Activated naive CD4-positive, alpha-beta T cell treated with anti-CD3 and anti-CD28 coated beads for 36 hours (primary cell): ENCODE measurements at regions of chr1 and their contacts with region 1.

Region 1: GRCh38 chr1:184075055-184076029 is 23.8 kb downstream of the TSEN15 start:
- DNase-seq: peak; percentile 27
- H3K4me3 Mint-ChIP-seq: no peak overlapping the region
- H3K27ac Mint-ChIP-seq: no peak overlapping the region
- H3K4me1 Mint-ChIP-seq: peaks cover 15% of the 10 kb centered on the region
- H3K27me3 Mint-ChIP-seq: no peaks in the 10 kb centered on the region

Region 2: DNA sequence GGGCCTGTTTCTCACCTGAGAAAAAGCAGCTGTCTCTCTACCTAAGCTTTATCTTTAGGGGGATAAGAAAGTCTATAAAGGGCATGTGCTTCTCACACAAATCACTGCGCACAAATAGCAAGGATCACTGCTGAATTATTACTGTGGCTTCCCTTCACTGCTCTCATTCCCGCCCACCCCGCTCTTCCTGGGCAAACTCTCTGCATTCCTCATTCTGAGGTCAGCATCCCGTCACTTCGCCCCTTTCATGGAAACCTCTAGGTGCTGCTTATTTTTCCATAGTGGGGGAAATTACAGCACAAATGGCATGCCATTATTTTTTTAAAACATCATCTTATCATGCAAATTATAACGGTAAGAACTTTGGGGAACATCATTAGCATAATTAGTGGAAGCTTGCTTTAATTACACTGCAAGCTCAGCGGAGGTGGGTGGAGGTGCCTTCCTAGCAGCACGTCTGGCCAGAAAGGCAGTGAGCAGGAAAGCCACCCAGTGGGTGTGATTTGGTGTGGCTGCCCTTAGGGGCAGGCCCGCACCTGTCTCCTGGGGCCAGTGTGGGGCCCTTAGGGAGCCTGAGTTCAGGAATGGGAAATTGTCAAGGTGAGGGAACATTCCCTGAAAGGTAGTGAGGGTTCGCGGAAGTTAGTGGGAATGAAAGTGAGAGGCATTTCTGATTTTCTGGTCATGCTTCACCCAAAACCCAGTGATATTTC is 783.4 kb before region 1 on chr1:
- CTCF ChIA-PET with region 1: no interaction called
- intact Hi-C with region 1: no loop called
- DNase-seq: no peak
- H3K4me3 Mint-ChIP-seq: no peak overlapping the region
- H3K27ac Mint-ChIP-seq: no peak overlapping the region
- H3K4me1 Mint-ChIP-seq: no peaks in the 10 kb centered on the region
- H3K27me3 Mint-ChIP-seq: peaks cover 5% of the 10 kb centered on the region

Region 3: GRCh38 chr1:184222652-184223052 is 147.3 kb after region 1 on chr1:
- CTCF ChIA-PET with region 1: interaction called, 4 read pairs
- intact Hi-C with region 1: loop called (anchors 1 kb)
- DNase-seq: peak; percentile 59
- H3K4me3 Mint-ChIP-seq: no peak overlapping the region
- H3K27ac Mint-ChIP-seq: no peak overlapping the region
- H3K4me1 Mint-ChIP-seq: no peaks in the 10 kb centered on the region
- H3K27me3 Mint-ChIP-seq: peaks cover 2% of the 10 kb centered on the region

Region 4: DNA sequence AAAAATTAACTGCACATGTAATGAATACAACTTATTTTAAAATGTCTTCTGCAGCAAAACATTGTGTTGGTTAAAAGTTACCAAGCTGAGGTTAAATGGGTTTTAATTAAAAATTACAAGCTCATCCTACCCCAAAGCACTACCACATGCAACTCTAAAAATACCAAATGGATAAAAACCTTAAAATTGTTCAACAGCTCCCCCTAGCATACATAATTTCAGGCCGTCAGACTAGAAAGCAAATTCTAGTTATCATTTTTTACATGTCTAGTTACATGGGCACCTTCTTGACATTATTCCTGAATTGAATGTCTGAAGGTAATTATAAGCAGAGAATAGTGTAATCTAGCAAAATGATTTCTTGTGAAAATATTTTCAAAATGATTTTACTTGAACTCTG is 488.0 kb after region 1 on chr1:
- CTCF ChIA-PET with region 1: no interaction called
- intact Hi-C with region 1: loop called (anchors 5 kb)
- DNase-seq: no peak
- H3K4me3 Mint-ChIP-seq: no peak overlapping the region
- H3K27ac Mint-ChIP-seq: no peak overlapping the region
- H3K4me1 Mint-ChIP-seq: no peaks in the 10 kb centered on the region
- H3K27me3 Mint-ChIP-seq: peaks cover 6% of the 10 kb centered on the region

Region 5: DNA sequence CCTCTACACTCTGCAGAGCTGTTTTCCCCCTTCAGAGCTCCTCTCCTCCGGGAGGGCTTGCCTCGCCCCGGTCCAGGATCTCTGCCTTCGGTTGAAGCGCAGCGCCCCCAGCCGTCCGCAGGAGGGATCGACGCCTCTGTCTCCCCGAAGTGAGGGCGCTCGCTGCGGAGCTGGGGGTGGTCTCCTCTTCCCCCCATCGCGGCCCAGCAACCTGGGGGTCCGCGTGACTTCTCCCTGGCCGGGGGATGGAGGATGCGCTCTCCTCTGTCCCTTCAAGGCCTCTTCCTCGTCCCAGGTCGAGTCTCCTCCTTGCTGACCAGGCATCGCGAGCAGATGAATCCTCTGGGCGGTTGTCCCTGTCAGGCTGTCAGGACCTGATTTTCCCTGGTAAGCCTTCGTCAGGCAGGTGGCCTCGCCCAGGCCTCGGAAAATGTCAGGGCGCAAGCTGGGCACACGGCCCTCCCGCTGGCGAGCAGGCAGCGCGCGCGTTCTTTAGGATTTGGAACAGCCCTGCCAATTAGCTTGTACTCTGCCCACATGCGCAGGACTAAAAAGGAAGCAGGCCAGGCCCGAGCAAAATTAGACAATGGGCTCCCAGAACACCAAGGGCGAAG is 588.8 kb after region 1 on chr1:
- CTCF ChIA-PET with region 1: no interaction called
- intact Hi-C with region 1: loop called (anchors 1 kb)
- DNase-seq: peak; percentile 61
- H3K4me3 Mint-ChIP-seq: no peak overlapping the region
- H3K27ac Mint-ChIP-seq: no peak overlapping the region
- H3K4me1 Mint-ChIP-seq: peaks cover 1% of the 10 kb centered on the region
- H3K27me3 Mint-ChIP-seq: peaks cover 20% of the 10 kb centered on the region

Region 6: DNA sequence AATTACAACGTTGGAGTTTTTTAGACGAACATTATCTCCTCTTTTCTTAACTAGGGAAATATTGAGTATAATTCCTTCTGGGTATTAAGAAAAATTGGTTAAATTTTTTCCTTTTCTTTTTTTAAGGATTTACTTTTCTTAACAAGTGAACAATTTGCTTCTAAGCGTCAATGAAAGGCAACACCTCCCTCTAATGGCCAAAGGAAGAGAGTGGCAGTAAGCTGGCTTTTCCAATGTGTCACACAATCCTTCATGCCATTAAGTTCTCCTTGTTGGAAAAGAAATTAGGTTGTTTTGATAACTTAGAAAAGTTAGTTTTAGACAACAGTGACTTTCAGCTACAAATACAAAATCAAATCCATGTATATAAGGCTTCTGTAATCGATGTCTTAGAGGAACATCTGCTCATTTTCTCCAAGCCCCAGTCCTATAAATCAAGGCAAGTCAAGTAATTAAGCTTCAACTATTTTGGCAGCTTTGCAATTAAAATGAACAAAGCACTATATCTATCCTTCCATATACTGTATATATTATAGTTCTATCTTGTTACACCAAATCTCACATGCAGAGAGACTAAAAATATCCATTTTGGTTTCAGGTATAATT is 616.5 kb after region 1 on chr1:
- CTCF ChIA-PET with region 1: no interaction called
- intact Hi-C with region 1: loop called (anchors 10 kb)
- DNase-seq: no peak
- H3K4me3 Mint-ChIP-seq: no peak overlapping the region
- H3K27ac Mint-ChIP-seq: no peak overlapping the region
- H3K4me1 Mint-ChIP-seq: peaks cover 4% of the 10 kb centered on the region
- H3K27me3 Mint-ChIP-seq: no peaks in the 10 kb centered on the region

Region 7: DNA sequence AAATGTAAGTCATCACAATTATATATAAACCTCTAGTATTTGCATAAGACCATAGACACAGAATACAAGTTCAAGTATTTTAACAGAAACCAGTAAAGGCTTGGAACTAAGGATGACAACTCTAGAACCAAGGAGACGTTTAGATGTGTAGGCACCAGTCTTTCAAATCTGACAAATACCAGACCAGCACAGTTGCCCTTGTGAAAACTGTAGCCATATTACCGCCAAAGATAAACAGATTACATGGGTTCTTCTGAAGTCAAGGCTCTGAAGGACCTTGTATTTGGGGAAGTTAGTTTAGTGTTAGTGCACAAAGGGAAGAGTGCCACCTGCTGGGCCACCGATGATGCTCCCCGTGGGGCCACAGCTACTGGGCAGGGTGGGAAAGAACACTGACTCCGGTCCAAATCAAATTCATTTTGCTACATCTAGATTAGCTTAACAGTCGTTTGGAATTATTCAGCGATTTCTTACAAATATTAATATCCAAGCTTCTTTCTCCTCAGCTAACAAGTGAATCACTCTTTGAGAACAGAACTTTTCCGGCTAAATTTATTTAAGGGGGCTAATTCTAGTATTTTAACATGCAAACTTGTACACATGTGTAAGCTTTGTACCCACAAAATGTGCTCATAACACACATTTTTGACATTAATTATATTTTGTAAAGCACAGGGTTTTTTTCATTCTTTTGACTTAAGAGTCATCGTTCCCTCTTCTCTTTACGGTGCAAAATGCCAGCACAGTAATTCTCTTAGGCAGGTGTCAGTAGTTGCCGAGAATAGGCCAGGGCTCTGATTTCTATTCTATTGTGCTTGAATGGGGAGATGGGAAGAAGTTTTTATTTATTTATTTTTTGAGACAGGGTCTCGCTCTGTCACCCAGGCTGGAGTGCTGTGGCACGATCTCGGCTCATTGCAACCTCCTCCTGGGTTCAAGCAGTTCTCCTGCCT is 906.9 kb after region 1 on chr1:
- CTCF ChIA-PET with region 1: no interaction called
- intact Hi-C with region 1: loop called (anchors 2 kb)
- DNase-seq: peak; percentile 84
- H3K4me3 Mint-ChIP-seq: no peak overlapping the region
- H3K27ac Mint-ChIP-seq: no peak overlapping the region
- H3K4me1 Mint-ChIP-seq: no peaks in the 10 kb centered on the region
- H3K27me3 Mint-ChIP-seq: peaks cover 17% of the 10 kb centered on the region